ENCODE measurements at regions of chr21 and their contacts with region 1.

Region 1: DNA sequence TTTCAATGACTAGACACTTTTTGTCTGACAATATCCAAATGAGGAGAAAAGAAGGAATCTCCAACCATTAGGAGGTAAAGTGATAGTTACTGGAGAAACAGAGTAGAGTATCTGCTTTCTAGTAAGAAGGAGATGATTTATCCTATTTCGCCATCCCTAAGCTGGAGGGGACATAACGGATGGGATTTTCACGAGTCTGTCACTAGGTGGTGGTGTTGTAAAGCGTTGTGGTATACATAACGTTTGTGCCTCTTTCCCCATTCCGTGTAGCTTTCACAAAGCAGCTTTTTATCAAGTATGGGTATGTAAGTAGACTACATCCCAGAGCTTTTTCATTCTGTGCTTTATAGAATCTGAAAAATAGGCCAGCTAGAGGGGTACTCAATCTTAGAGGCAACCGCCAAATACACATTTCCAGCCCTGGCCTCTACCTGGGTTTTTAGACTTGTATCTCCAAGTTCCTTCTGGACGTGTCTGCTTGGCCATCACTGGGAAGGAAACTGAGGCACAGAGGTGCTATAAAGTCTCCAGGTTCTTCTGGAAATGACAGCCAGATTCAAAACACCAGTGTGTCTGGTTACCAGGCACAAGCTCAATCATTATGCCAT is 33.3 kb upstream of the FAM3B start:
- DNase-seq: no peak
- ATAC-seq: peak; percentile 93
- H3K4me3 Mint-ChIP-seq: no peak overlapping the region
- H3K27ac Mint-ChIP-seq: no peak overlapping the region
- H3K4me1 Mint-ChIP-seq: peaks cover 2% of the 10 kb centered on the region
- H3K27me3 Mint-ChIP-seq: no peaks in the 10 kb centered on the region
- CTCF ChIP-seq: no peak

Region 2: GRCh38 chr21:40291560-40291959 is 991.8 kb before region 1 on chr21:
- CTCF ChIA-PET with region 1: no interaction called
- POLR2A ChIA-PET with region 1: no interaction called
- intact Hi-C with region 1: no loop called
- DNase-seq: no peak
- ATAC-seq: no peak
- H3K4me3 Mint-ChIP-seq: no peak overlapping the region
- H3K27ac Mint-ChIP-seq: no peak overlapping the region
- H3K4me1 Mint-ChIP-seq: no peaks in the 10 kb centered on the region
- H3K27me3 Mint-ChIP-seq: no peaks in the 10 kb centered on the region
- CTCF ChIP-seq: no peak

Region 3: DNA sequence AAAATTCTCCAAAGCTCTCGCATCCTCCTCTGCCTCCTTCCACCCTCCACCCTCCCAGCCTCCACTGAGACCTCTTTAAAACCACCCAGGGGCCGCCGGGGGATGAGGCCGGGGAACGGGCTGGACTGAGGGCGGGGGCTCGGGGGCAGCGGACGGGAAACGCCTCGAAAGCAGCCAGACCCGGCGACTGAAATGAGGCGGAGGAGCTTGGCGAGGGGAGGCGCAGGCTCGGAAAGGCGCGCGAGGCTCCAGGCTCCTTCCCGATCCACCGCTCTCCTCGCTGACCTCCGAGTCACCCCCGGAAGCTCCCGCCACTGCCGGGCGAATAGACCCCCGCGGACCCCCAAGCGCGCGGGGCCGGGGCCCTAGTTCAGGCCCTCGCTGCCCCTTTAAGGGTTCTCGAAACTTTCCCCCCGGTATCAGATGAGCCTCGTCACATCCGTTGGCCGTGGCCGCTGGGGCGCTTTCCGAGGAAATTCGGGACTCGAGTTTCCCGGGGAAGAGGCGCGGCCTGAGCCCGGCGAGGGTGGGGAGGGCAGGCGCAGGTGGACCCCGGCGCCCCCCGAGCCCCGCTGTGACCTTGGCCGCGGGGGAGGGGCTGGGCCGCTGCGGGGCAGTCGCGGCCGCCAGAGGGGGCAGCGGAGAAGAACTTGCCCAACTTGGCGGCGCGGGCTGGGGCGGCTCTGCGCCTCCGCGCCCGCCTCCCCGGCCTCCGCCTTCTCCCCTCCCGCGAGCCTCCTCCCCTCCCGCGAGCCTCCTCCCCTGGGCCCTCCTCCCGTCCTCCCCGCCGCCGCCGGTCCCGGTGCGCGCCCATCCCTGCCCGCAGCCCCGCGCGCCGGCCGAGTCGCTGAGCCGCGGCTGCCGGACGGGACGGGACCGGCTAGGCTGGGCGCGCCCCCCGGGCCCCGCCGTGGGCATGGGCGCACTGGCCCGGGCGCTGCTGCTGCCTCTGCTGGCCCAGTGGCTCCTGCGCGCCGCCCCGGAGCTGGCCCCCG is 115.7 kb before region 1 on chr21 and contains the start of gene BACE2:
- CTCF ChIA-PET with region 1: interaction called, 49 read pairs
- POLR2A ChIA-PET with region 1: no interaction called
- intact Hi-C with region 1: no loop called
- DNase-seq: peak; percentile 77
- ATAC-seq: peak; percentile 87
- H3K4me3 Mint-ChIP-seq: peak within 1 kb of the TSS; percentile 88
- H3K27ac Mint-ChIP-seq: peak within 1 kb of the TSS; percentile 69
- H3K4me1 Mint-ChIP-seq: peaks cover 26% of the 10 kb centered on the region
- H3K27me3 Mint-ChIP-seq: peaks cover 5% of the 10 kb centered on the region
- CTCF ChIP-seq: no peak
- total RNA-seq, gene BACE2: 13.0 and 17.1 TPM in 2 replicates

Region 4: DNA sequence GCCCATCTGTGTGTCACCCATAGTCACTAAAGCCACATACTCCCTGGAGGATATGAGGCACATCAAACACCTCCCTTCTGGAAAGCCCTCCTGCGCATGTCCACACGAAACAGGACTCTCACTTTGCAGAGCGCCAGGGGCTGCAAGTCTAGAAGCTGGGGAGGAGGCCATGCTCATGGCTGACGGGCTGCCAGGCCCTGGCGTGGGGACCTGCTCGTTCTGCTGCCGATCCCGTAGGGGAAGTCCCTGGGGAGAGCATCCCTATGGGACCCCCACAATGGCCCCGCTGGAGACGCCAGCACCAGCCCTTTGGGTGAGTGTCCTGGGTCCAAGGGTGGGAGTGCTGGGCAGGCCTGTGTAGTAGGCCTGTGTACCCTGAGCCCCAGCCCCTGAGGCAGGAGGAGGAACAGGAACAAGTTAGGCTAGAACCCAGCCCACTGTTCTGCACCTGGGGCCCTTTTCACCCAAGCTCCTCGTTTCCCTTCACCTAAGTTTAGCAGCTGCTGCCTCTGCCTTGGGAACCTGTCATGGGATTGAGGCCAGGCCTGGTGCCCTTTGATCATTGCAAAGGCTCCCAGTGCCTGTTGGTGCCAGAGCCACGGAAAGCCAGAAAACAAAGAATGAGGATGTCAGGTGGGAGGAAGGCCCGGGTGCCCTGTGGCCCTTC is 43.2 kb after region 1 on chr21:
- CTCF ChIA-PET with region 1: no interaction called
- POLR2A ChIA-PET with region 1: no interaction called
- intact Hi-C with region 1: no loop called
- DNase-seq: no peak
- ATAC-seq: no peak
- H3K4me3 Mint-ChIP-seq: no peak overlapping the region
- H3K27ac Mint-ChIP-seq: no peak overlapping the region
- H3K4me1 Mint-ChIP-seq: peaks cover 1% of the 10 kb centered on the region
- H3K27me3 Mint-ChIP-seq: peaks cover 3% of the 10 kb centered on the region
- CTCF ChIP-seq: no peak

Region 5: GRCh38 chr21:41369105-41369919 is 86.0 kb after region 1 on chr21:
- CTCF ChIA-PET with region 1: interaction called, 45 read pairs
- POLR2A ChIA-PET with region 1: interaction called, 15 read pairs
- intact Hi-C with region 1: loop called (anchors 1 kb)
- DNase-seq: peak; percentile 51
- ATAC-seq: peak; percentile 47
- H3K4me3 Mint-ChIP-seq: peak overlapping the region; percentile 71
- H3K27ac Mint-ChIP-seq: peak overlapping the region; percentile 85
- H3K4me1 Mint-ChIP-seq: peaks cover 72% of the 10 kb centered on the region
- H3K27me3 Mint-ChIP-seq: no peaks in the 10 kb centered on the region
- CTCF ChIP-seq: no peak

Region 6: GRCh38 chr21:41431788-41432548 is 148.7 kb after region 1 on chr21:
- CTCF ChIA-PET with region 1: interaction called, 10 read pairs
- POLR2A ChIA-PET with region 1: no interaction called
- intact Hi-C with region 1: no loop called
- DNase-seq: peak; percentile 53
- ATAC-seq: peak; percentile 98
- H3K4me3 Mint-ChIP-seq: peak overlapping the region; percentile 52
- H3K27ac Mint-ChIP-seq: peak overlapping the region; percentile 65
- H3K4me1 Mint-ChIP-seq: peaks cover 56% of the 10 kb centered on the region
- H3K27me3 Mint-ChIP-seq: no peaks in the 10 kb centered on the region
- CTCF ChIP-seq: no peak

Region 7: DNA sequence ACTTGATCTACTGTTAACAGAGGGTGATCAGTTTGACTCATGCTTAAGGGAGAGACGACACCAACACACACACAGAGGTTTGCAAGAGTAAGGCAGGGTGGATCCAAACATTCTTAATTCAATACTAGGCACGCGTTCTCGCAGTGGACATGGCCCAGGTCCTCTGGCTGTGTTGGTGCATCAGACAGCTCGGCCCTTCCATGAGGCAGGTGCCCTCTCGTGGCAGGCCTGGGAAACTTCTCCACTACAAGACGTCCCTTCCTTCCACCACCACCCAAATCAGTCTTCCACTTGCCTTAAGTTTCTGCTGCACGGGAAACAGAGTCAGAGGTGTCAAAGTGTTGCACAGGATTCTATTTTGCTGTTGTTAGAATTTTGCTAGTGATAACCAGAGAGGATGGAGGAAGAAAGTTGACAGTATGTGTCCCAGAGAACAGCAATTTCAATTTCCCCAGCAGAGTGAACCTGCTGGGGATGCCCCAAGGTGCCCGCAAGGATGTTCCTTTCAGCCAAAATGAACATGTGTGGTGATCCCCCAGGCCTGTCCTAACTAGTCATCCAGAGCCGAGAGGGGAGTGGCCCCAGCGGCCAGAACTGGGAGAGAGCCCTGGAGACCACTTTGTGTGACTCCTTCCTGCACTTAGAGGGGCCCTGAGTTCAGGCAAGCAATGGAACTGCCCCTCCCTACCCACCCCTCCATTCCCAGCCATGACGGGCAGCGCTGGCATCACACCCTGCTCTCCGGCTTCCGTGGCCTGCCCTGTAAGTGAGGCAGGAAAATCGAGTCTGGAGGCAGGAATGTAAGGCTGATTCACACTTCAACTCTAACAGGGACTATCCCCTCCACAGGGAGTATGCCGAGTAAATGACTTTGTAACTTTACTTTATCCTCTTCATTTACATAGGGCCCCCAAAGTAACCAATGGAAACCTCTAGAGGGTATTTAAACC is 177.5 kb after region 1 on chr21:
- CTCF ChIA-PET with region 1: interaction called, 165 read pairs
- POLR2A ChIA-PET with region 1: interaction called, 7 read pairs
- intact Hi-C with region 1: loop called (anchors 1 kb)
- DNase-seq: peak; percentile 39
- ATAC-seq: peak; percentile 80
- H3K4me3 Mint-ChIP-seq: no peak overlapping the region
- H3K27ac Mint-ChIP-seq: peak overlapping the region; percentile 0
- H3K4me1 Mint-ChIP-seq: peaks cover 21% of the 10 kb centered on the region
- H3K27me3 Mint-ChIP-seq: no peaks in the 10 kb centered on the region
- CTCF ChIP-seq: peak; percentile 39

Region 8: GRCh38 chr21:41777951-41778874 is 494.9 kb after region 1 on chr21:
- CTCF ChIA-PET with region 1: interaction called, 12 read pairs
- POLR2A ChIA-PET with region 1: no interaction called
- intact Hi-C with region 1: no loop called
- DNase-seq: no peak
- ATAC-seq: no peak
- H3K4me3 Mint-ChIP-seq: no peak overlapping the region
- H3K27ac Mint-ChIP-seq: no peak overlapping the region
- H3K4me1 Mint-ChIP-seq: peaks cover 2% of the 10 kb centered on the region
- H3K27me3 Mint-ChIP-seq: peaks cover 56% of the 10 kb centered on the region
- CTCF ChIP-seq: no peak

Region 9: DNA sequence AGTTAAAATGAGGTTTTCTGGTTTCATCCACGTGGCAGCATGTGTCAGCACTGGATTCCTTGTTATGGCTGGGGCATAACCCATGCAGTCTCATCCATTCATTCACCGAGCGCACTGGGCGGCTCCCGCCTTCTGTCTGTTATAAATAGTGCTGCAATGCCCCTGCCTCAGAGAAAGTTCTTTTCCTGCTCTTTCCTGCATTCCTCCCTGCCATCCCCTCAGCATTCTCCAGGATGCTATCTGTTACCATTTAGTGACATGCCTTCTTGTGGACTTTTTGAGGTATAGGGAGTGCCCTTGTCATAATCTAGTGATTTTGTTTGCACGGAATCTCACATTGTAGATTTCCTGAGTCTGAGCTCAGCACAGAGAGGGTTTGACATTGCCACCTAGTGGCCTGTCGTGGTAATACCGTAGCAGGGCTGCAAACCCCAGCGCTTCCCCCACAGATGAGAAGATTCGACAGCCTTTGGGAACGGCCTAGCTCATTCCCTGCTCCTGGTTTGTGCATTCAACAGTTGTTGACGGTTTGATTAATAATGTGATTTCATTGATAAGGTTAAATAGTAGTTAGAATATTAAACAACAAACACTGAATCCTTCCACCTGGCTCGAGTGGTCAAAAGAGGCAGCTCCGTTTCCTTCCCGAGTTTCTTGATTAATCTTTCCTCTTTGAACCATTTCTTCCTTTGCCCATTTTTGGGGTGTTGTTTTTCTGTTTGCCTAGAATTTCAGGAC is 834.1 kb after region 1 on chr21:
- CTCF ChIA-PET with region 1: interaction called, 21 read pairs
- POLR2A ChIA-PET with region 1: no interaction called
- intact Hi-C with region 1: loop called (anchors 5 kb)
- DNase-seq: peak; percentile 61
- ATAC-seq: peak; percentile 85
- H3K4me3 Mint-ChIP-seq: peak overlapping the region; percentile 37
- H3K27ac Mint-ChIP-seq: no peak overlapping the region
- H3K4me1 Mint-ChIP-seq: peaks cover 48% of the 10 kb centered on the region
- H3K27me3 Mint-ChIP-seq: peaks cover 16% of the 10 kb centered on the region
- CTCF ChIP-seq: peak; percentile 70